Vagina (tissue), 2 donors: ENCODE measurements at regions of chr3 and their contacts with region 1.

Region 1: DNA sequence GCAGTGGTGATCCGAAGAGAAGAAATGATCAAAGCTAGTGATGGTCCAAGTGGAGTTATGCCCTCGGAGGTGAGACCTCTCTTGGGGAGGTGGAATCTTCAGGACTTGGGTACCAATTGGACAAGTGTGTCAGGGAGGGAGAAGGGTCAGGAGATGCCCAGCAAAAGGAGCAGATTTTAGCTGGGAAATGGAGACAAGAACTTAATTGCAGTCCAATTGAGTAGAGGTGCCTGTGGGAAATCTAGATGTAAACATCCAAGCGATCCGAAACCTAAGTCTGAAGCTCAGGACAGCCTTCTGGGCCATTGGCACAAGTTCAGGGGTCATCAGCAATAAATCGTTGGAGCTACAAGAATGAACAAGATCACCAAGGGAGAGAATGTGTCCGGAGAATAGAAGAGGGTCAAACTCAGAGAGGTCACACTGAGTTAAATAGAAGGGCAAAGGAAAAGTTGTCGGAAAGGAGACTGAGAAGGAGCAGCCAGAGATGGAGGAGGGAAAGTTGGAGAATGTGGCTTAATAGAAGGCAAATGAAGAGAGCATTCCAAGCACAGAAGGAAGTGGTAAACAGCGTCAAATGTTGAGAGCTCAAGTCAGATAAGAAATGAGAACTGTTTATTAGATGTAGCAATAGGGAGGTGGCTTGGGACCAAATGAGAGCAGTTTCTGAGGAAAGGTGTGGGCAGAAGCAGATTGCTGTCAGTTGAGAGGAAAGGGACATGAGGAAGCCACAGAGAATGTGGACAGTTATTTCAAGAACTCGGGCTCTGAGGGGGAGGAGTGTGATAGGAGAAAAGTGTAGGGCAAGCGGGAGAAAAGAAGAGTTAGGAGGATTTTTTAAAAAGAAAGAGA is 64.2 kb upstream of the FNDC3B start:
- DNase-seq: no peak
- H3K4me3 ChIP-seq: no peak overlapping the region
- H3K27ac ChIP-seq: peak overlapping the region; percentile 33
- H3K4me1 ChIP-seq: no peaks in the 10 kb centered on the region
- H3K27me3 ChIP-seq: no peaks in the 10 kb centered on the region
- CTCF ChIP-seq: no peak
- POLR2A ChIP-seq: no peak

Region 2: DNA sequence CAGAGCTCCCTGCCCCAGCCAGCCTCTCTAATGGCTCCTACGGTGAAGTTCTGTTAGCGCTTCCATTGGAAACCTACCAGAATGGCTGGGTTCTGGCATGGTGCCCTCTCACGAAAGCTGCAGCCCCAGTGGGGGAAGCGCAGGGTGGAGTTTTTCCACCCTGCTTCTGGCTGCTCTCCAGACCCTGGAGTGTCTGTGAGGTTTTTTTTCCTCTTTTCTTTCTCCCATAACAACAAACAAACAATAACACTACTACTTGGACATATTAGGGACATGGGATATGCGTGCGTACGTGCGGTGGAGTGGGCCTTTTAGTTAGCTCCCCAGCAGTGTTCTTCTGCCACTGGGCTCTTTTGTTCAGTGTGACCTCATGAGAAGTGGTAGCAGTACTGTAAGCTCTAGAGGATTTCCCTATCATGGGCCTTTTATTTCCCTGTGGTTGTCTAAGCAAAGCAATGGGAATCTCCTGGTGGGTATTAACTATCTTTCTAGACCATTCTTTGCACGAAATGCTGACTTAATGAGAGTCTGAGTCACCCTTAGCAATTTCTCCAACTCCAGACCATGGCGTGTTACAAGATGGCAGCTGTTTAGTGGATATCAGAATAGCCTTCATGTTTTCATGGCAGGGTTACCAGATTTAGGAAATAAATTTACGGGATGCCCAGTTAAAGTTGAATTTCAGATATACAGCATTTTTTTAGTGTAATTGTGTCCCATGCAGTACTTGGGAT is 226.1 kb after region 1 on chr3:
- intact Hi-C with region 1: loop called (anchors 10 kb)
- DNase-seq: no peak
- H3K4me3 ChIP-seq: no peak overlapping the region
- H3K27ac ChIP-seq: peak overlapping the region; percentile 49
- H3K4me1 ChIP-seq: peaks cover 52% of the 10 kb centered on the region
- H3K27me3 ChIP-seq: no peaks in the 10 kb centered on the region
- CTCF ChIP-seq: no peak
- POLR2A ChIP-seq: no peak

Region 3: DNA sequence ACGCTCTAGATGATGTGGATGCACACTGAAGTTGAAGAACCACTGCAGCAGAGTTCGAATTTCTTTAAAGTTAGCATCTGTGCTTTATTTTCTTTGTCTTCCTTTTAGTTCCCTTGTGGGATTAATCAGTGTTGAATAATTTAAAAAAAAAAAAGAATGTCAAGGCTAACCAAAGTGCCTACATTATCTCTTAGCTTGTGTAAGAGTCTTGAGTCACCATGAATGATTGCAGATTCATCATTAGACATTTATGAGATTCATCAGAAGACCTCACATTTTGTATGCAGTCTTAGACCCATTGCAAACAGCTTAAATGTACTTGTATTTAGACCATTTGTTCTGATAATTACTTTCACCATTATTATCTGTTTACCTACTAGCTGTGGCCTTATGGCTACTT is 246.3 kb after region 1 on chr3:
- intact Hi-C with region 1: no loop called
- DNase-seq: no peak
- H3K4me3 ChIP-seq: no peak overlapping the region
- H3K27ac ChIP-seq: no peak overlapping the region
- H3K4me1 ChIP-seq: peaks cover 64% of the 10 kb centered on the region
- H3K27me3 ChIP-seq: no peaks in the 10 kb centered on the region
- CTCF ChIP-seq: no peak
- POLR2A ChIP-seq: no peak